Thyroid gland (tissue), 4 donors: ENCODE measurements at regions of chr1 and their contacts with region 1.

Region 1: DNA sequence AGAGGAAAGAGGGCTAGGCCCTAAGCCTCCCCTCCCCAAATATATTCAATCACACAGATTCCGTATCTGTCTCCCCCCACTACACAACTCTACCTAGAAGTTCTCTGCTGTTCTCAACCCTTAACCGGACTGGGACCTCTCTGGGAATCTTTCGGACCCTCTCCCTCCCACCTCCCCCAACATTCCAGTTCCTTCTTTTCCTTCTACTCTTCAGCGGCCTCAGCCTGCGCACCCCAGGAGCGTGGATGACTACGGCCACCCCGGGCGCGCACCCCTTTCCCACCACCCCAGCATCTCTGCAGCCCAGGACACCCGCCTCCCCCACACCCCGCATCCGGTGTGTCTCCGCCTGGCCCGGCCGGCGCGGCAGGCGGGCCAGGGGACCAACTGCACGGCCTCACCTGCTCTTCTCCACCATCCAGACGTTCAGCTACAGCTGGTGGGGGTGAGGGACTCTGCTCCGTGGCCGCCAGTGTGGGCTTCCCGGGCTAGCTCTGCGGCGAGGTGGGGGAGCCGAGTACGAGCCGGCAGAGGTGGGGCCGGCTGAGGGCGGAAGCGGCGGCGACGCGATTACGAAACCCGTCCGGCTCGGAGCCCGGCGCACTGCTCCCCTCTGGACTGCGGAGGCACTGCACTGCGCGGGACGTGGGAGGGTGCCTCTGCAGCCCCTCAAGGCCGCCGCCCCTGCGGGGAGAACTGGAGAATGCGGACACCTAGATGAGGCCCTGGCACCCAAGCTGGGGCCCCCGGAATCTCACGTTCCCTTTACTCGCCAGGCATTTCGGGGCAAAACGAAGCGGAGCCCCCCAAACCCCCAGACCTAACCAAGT is at the start of gene CDC42SE1:
- DNase-seq: peak; percentile 71 to 78
- H3K4me3 ChIP-seq: peak within 1 kb of the TSS; percentile 84 to 97 (median 96)
- H3K27ac ChIP-seq: peak within 1 kb of the TSS; percentile 82 to 98 (median 91)
- H3K4me1 ChIP-seq: peaks cover 33 to 35% of the 10 kb centered on the region in 2 donors
- H3K27me3 ChIP-seq: no peaks in the 10 kb centered on the region
- CTCF ChIP-seq: peak; percentile 68 to 93 (median 90)
- POLR2A ChIP-seq: peak in 1 of 2 donors; percentile 88
- total RNA-seq, gene CDC42SE1: 64.9 to 95.3 (median 82.2) TPM

Region 2: DNA sequence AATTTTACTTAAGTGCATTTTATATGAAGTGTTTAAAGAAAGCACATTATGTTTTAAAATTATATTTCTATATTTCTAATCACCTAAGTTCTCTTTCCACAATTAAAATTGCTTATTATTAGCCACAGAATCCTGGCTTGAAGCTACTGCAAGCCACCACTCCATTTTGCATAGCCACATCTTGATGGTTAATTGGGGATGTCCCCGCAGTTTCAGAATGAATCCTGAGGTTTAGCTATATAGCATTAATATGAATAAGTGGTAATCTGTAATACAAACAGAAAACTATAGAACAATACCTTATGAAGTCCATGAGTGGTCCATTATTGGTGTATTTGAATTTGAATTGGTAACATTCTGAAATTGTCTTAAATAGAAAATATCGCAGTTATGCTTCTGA is 350.7 kb before region 1 on chr1:
- intact Hi-C with region 1: no loop called
- DNase-seq: no peak
- H3K4me3 ChIP-seq: no peak overlapping the region
- H3K27ac ChIP-seq: no peak overlapping the region
- H3K4me1 ChIP-seq: no peaks in the 10 kb centered on the region
- H3K27me3 ChIP-seq: no peaks in the 10 kb centered on the region
- CTCF ChIP-seq: no peak
- POLR2A ChIP-seq: no peak

Region 3: GRCh38 chr1:151008190-151008860 is 51.0 kb before region 1 on chr1 and contains the start of gene PRUNE1:
- intact Hi-C with region 1: loop called (anchors 5 kb)
- DNase-seq: peak; percentile 96
- H3K4me3 ChIP-seq: peak within 1 kb of the TSS; percentile 71 to 89 (median 73)
- H3K27ac ChIP-seq: peak within 1 kb of the TSS; percentile 92 to 98 (median 96)
- H3K4me1 ChIP-seq: peaks cover 64 to 65% of the 10 kb centered on the region in 2 donors
- H3K27me3 ChIP-seq: no peaks in the 10 kb centered on the region
- CTCF ChIP-seq: no peak
- POLR2A ChIP-seq: peak in 1 of 2 donors; percentile 95
- total RNA-seq, gene PRUNE1: 66.0 to 79.0 (median 76.3) TPM